ENCODE measurements at regions of chr22 and their contacts with region 1.

Region 1: GRCh38 chr22:40479126-40479800 is 108.9 kb downstream of the SGSM3 start:
- DNase-seq: no peak
- H3K4me3 Mint-ChIP-seq: no peak overlapping the region
- H3K27ac Mint-ChIP-seq: no peak overlapping the region
- H3K4me1 Mint-ChIP-seq: peaks cover 21% of the 10 kb centered on the region
- H3K27me3 Mint-ChIP-seq: no peaks in the 10 kb centered on the region

Region 2: DNA sequence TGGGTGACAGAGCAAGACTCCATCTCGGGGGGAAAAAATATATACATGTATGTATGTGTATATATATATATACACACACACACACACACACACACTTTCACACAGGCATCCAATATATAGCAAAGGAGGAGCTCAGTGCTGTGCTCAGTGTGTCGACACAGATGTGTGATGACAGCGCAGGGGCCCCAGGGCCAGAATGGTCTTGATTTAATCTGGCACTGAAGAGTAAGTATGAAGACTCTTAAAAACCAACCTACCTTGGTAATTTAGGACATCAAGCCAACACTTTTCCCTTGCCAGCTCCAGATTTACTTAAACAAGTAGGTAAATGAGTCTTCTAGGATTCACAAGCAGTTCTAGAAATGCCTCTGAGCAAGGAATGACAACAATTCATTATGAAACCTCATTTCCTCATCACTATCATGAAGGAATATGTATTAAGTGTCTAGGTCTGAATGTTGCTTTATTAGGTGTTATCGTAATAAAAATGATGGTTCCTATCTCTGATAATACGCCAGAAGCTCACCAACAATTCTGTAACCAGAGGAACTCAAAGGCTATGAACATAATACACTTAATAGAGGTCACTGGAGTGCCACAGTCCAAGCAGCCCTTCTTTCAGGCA is 37.4 kb before region 1 on chr22:
- CTCF ChIA-PET with region 1: interaction called, 102 read pairs
- POLR2A ChIA-PET with region 1: interaction called, 5 read pairs
- intact Hi-C with region 1: loop called (anchors 2 kb)
- DNase-seq: no peak
- H3K4me3 Mint-ChIP-seq: no peak overlapping the region
- H3K27ac Mint-ChIP-seq: no peak overlapping the region
- H3K4me1 Mint-ChIP-seq: peaks cover 61% of the 10 kb centered on the region
- H3K27me3 Mint-ChIP-seq: no peaks in the 10 kb centered on the region

Region 3: GRCh38 chr22:40567106-40567505 is 87.8 kb after region 1 on chr22:
- CTCF ChIA-PET with region 1: no interaction called
- POLR2A ChIA-PET with region 1: no interaction called
- intact Hi-C with region 1: no loop called
- DNase-seq: no peak
- H3K4me3 Mint-ChIP-seq: no peak overlapping the region
- H3K27ac Mint-ChIP-seq: no peak overlapping the region
- H3K4me1 Mint-ChIP-seq: no peaks in the 10 kb centered on the region
- H3K27me3 Mint-ChIP-seq: no peaks in the 10 kb centered on the region

Region 4: DNA sequence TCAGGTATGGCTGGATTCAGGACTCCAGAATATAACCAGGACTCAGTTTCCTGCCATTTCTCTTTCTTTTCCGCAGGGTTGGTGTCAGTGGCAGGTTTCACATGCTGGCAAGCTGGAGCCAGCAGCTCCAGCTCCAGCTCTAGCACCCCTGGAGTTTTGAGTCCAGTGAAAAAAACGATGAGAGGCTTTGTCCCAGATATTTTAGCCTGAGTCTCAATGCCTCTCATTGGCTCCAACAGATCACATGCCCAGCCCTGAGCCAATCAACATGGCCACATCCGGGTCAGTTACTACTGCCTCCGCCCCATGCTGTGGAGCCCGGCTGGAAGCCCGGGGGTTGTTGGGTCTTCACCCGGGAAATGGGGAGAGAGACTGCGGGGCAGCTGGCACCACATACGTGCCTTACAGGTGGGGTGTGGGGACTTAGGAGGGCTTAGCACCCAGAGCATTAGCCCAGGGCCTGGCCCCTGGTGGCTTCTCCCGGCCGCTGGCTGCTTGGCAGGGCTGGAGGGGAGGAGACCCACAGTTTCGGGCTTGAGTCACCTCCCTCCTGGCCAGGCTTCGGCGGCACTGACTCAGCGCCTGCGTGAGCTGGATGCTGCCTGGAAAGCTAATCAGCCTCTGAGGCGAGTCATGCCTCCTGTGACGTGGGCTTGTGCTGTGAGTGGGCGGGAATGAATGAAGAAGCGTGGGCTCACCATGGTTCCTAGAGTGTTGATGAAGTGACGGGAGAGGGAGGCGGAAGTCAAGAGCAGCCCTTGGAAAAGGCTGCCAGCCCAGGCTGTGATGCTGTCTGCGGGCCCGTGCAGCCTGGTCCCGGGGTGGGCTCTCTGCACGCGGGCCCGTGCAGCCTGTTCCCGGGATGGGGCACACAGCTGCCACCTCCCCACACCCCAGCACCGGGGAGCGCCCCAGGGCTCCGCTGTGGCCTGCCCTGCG is 172.6 kb after region 1 on chr22:
- CTCF ChIA-PET with region 1: no interaction called
- POLR2A ChIA-PET with region 1: no interaction called
- intact Hi-C with region 1: no loop called
- DNase-seq: peak; percentile 97
- H3K4me3 Mint-ChIP-seq: peak overlapping the region; percentile 70
- H3K27ac Mint-ChIP-seq: peak overlapping the region; percentile 91
- H3K4me1 Mint-ChIP-seq: peaks cover 24% of the 10 kb centered on the region
- H3K27me3 Mint-ChIP-seq: no peaks in the 10 kb centered on the region

Measured in activated CD4-positive, alpha-beta memory T cell treated with anti-CD3 and anti-CD28 coated beads for 36 hours (primary cell).